Breast epithelium (tissue), 4 donors: ENCODE measurements at regions of chr1 and their contacts with region 1.

Region 1: DNA sequence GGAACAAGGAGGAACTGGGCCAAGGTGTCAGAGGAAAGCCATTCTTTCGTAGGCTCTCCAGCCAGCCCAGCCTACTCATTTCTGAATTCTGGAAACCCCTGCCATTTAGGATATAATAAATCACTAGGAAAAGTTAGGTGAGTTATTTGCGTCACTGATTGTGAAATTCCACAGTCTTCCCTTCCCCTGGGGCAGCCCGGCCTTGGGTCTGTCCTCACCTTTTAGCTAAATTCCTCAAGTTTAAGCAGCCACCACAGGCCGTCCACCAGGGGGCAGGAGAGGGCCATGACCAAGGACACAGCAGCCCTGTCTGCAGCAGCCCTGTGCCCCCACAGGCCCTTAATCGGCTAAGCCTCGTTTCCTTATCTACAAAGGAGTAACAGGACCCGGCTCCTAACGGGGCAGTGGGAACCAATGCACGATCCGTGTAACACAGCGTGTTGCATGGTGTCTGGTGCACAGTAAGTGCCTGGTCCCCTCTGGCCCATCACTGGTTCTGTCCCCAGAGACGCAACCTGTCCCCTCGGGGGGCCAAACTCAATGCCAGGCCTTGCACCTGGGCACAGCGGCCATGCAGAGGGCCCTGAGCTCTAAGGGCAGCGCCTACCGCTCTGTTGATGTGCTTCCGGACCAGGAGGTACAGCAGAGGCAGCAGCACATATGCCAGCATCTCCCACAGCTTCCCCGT is 18.1 kb downstream of the GPR157 start:
- DNase-seq: peak; percentile 88 to 89
- H3K4me3 ChIP-seq: no peak overlapping the region
- H3K27ac ChIP-seq: peak overlapping the region in 1 of 2 donors; percentile 25
- H3K4me1 ChIP-seq: no peaks in the 10 kb centered on the region
- H3K27me3 ChIP-seq: no peaks in the 10 kb centered on the region
- CTCF ChIP-seq: peak; percentile 86 to 96 (median 95)
- POLR2A ChIP-seq: no peak

Region 2: DNA sequence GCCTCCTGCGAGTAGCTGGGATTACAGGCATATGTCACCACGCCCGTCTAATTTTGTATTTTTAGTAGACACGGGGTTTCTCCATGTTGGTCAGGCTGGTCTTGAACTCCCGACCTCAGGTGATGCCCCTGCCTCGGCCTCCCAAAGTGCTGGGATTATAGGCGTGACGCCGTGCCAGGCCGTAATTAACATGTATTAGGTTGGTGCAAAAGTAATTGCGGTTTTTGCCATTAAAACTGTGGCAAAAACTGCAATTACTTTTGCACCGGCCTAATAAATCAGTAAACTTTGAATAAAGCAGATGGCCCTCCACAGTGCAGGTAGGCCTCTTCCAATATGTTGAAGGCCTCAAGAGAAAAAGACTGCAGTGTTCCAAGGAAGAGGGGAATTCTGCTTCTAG is 1205.6 kb before region 1 on chr1:
- intact Hi-C with region 1: loop called (anchors 5 kb)
- DNase-seq: no peak
- H3K4me3 ChIP-seq: no peak overlapping the region
- H3K27ac ChIP-seq: no peak overlapping the region
- H3K4me1 ChIP-seq: no peaks in the 10 kb centered on the region
- H3K27me3 ChIP-seq: no peaks in the 10 kb centered on the region
- CTCF ChIP-seq: no peak
- POLR2A ChIP-seq: no peak

Region 3: GRCh38 chr1:7915826-7916500 is 1194.8 kb before region 1 on chr1:
- intact Hi-C with region 1: no loop called
- DNase-seq: no peak
- H3K4me3 ChIP-seq: no peak overlapping the region
- H3K27ac ChIP-seq: no peak overlapping the region
- H3K4me1 ChIP-seq: no peaks in the 10 kb centered on the region
- H3K27me3 ChIP-seq: no peaks in the 10 kb centered on the region
- CTCF ChIP-seq: no peak
- POLR2A ChIP-seq: no peak

Region 4: GRCh38 chr1:9050803-9051202 is 60.0 kb before region 1 on chr1:
- intact Hi-C with region 1: loop called (anchors 2 kb)
- DNase-seq: no peak
- H3K4me3 ChIP-seq: no peak overlapping the region
- H3K27ac ChIP-seq: no peak overlapping the region
- H3K4me1 ChIP-seq: no peaks in the 10 kb centered on the region
- H3K27me3 ChIP-seq: no peaks in the 10 kb centered on the region
- CTCF ChIP-seq: no peak
- POLR2A ChIP-seq: no peak

Region 5: DNA sequence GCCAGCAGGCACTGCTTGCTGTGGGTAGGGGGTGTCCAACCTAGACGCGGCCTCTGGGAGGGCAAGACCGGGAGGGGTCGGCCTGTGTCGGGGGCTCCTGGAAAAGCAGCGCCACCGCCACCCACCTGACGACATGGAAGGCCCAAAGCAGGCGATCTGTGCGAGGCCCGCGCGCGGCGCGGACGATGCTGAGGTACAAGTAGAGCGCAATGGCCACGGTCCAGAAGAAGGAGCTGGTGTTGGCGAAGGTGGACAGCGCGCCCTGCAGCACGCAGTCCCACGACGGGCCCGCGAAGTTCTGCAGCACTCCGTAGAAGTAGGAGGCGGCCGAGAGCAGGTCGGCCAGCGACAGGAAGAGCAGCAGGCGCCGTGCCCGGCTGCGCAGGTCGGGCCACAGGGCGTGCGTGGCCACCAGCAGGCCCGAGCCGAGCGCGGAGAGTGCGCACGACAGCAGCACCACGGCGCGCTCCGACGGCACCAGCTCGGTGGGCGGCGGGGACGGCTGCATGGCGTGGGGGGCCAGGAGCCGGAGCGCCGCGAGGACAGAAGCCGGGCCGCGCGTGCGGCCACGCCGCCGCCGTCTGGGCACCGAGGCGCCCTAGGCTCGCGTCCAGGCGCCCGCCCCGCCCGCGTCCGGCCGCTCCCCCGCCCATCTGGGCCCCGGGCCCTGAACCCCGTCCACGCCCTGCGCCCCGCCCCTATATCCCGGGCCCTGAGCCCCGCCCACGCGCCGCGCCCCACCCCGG is 17.9 kb after region 1 on chr1 and contains the start of gene GPR157:
- intact Hi-C with region 1: no loop called
- DNase-seq: peak; percentile 81 to 91
- H3K4me3 ChIP-seq: peak within 1 kb of the TSS; percentile 57 to 97 (median 75)
- H3K27ac ChIP-seq: peak within 1 kb of the TSS; percentile 95 to 96
- H3K4me1 ChIP-seq: peaks cover 6 to 7% of the 10 kb centered on the region in 2 donors
- H3K27me3 ChIP-seq: no peaks in the 10 kb centered on the region
- CTCF ChIP-seq: peak in 1 of 3 donors; percentile 17
- POLR2A ChIP-seq: peak; percentile 9
- total RNA-seq, gene GPR157: 4.3 to 11.7 (median 9.2) TPM